Thyroid gland (tissue), 4 donors: ENCODE measurements at regions of chr6 and their contacts with region 1.

Region 1: DNA sequence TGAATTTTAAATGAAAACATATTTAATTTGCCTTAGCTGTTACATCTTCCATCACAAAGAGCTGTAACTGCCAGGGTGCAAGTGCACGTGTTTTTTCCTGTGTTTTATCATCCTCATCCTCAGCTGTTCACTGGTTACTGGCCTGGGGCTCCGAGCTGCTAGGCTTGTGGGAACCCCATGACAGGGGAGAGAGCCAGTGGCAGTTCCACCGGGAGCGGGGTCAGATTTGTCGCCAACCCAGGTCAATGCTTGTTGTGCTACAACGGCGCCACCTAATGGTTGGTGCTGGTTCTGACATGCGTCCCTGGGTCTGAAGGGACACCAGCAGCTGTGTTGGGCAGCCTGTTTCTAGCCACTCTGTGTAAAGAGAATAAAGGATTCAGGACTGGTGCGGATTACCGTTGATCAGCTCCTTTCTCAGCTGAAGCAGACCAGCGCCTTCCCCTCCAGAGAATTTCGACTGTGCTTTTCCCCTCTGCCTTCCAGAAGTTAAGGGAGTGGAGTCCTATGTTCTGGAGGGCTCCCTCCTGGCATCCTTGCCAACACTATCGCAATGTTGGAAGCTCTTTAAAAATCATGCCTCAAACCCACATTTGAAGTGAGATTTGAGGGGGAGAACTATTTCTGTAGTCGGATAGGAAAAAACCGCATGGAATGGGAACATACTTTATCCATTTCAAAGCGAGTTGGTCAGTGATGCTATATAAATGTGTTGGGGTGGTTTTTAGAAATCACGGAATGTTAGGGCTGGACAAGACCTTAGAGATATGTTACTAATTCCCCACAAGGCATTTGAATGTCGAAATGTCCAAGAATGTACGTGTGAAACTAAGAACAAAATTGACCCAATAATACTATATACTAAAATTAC is 32.1 kb downstream of the SUMO4 start:
- DNase-seq: peak; percentile 89 to 93
- H3K4me3 ChIP-seq: no peak overlapping the region
- H3K27ac ChIP-seq: no peak overlapping the region
- H3K4me1 ChIP-seq: no peaks in the 10 kb centered on the region
- H3K27me3 ChIP-seq: no peaks in the 10 kb centered on the region
- CTCF ChIP-seq: peak; percentile 79 to 95 (median 92)
- POLR2A ChIP-seq: no peak

Region 2: GRCh38 chr6:149028767-149029405 is 403.3 kb before region 1 on chr6:
- intact Hi-C with region 1: loop called (anchors 5 kb)
- DNase-seq: peak; percentile 44 to 66
- H3K4me3 ChIP-seq: no peak overlapping the region
- H3K27ac ChIP-seq: no peak overlapping the region
- H3K4me1 ChIP-seq: peaks cover 25 to 29% of the 10 kb centered on the region in 2 donors
- H3K27me3 ChIP-seq: no peaks in the 10 kb centered on the region
- CTCF ChIP-seq: peak; percentile 39 to 91 (median 66)
- POLR2A ChIP-seq: no peak

Region 3: DNA sequence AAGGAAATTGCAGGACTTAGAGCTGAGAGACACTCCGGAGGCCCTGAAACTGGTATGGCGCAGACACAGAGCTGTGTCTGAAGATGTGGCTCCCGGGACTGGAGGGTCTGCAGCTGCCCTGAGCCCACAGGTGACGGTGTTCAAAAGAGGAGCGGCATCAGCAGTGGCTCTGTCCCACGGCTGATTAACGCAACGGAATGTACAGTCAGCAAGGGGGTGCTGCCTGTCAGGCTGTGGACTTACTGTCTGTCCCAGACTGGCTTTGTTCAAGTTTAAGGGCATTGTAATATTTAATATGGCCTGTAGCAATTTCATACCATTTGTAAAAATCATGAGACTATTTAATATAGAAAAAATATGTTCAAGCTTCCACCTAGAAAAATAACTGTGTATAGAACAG is 342.6 kb before region 1 on chr6:
- intact Hi-C with region 1: loop called (anchors 5 kb)
- DNase-seq: no peak
- H3K4me3 ChIP-seq: no peak overlapping the region
- H3K27ac ChIP-seq: no peak overlapping the region
- H3K4me1 ChIP-seq: peaks cover 18 to 21% of the 10 kb centered on the region in 2 donors
- H3K27me3 ChIP-seq: no peaks in the 10 kb centered on the region
- CTCF ChIP-seq: no peak
- POLR2A ChIP-seq: no peak

Region 4: GRCh38 chr6:149316798-149317655 is 115.1 kb before region 1 on chr6:
- intact Hi-C with region 1: loop called (anchors 10 kb)
- DNase-seq: peak; percentile 90 to 92
- H3K4me3 ChIP-seq: peak overlapping the region; percentile 37 to 97 (median 91)
- H3K27ac ChIP-seq: peak overlapping the region; percentile 97 to 98 (median 97)
- H3K4me1 ChIP-seq: peaks cover 24 to 31% of the 10 kb centered on the region in 2 donors
- H3K27me3 ChIP-seq: no peaks in the 10 kb centered on the region
- CTCF ChIP-seq: peak in 1 of 6 experiments; percentile 14
- POLR2A ChIP-seq: peak in 1 of 2 donors; percentile 81

Region 5: DNA sequence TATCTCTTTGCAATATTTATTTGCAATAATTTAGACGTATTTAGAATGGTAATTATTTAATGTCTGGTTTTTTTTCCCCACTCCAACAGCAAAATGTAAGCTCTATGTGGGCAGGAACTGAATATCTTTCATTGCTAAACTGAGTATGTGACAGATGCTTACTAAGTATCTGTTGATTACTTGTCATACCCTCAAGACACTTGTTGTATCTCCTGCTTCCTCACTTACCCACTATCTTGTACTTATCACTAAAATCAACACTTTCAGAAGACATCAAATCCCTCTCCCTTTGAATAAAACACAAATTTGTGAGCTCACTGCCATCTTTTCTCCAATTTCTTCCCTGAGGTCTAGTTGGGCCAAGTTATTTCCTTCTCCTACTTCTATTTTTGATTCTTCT is 83.4 kb after region 1 on chr6:
- intact Hi-C with region 1: no loop called
- DNase-seq: no peak
- H3K4me3 ChIP-seq: no peak overlapping the region
- H3K27ac ChIP-seq: no peak overlapping the region
- H3K4me1 ChIP-seq: no peaks in the 10 kb centered on the region
- H3K27me3 ChIP-seq: no peaks in the 10 kb centered on the region
- CTCF ChIP-seq: no peak
- POLR2A ChIP-seq: no peak